PC-9 (cell line): ENCODE measurements at regions of chr17 and their contacts with region 1.

Region 1: DNA sequence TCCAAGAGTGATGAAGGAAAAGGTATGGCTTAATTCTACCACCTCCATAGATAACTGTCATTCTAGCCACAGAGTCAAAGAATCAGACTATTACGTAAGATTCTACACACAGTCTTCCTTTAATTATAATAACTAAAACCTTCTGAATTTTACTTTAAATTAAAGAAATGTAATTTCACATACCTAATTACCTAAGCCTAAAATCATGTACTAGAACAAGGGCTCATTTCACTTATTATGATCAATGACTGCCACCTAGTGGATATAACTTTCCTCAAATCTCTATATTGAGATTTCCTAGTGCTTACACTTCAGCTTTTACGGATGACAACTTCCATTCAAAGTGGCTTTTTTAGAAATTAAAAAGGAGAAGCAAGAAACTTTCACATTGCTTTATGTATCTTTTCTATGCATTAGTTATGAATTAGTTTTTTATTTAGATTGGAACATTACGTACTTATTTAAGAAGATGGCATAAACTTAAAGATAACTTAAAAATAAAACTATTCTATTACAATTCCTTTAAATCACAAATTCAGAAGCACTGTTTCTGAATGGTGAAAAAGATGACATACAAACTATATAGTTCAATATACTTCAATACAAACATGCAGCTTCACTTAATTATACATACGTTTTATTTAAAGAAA is 18.2 kb upstream of the ABCA10 start:
- DNase-seq: no peak
- H3K4me3 ChIP-seq: no peak overlapping the region
- H3K27ac ChIP-seq: no peak overlapping the region
- H3K4me1 ChIP-seq: peaks cover 11% of the 10 kb centered on the region; the same call in 1 of the 2 replicates
- H3K27me3 ChIP-seq: no peaks in the 10 kb centered on the region
- CTCF ChIP-seq: peak; percentile 85

Region 2: GRCh38 chr17:67959288-67959900 is 1287.5 kb before region 1 on chr17:
- CTCF ChIA-PET with region 1: no interaction called
- POLR2A ChIA-PET with region 1: no interaction called
- intact Hi-C with region 1: loop called (anchors 10 kb)
- DNase-seq: no peak
- H3K4me3 ChIP-seq: no peak overlapping the region
- H3K27ac ChIP-seq: no peak overlapping the region
- H3K4me1 ChIP-seq: no peaks in the 10 kb centered on the region
- H3K27me3 ChIP-seq: no peaks in the 10 kb centered on the region
- CTCF ChIP-seq: no peak

Region 3: GRCh38 chr17:69287168-69287567 is 40.3 kb after region 1 on chr17:
- CTCF ChIA-PET with region 1: no interaction called
- POLR2A ChIA-PET with region 1: no interaction called
- intact Hi-C with region 1: no loop called
- DNase-seq: no peak
- H3K4me3 ChIP-seq: no peak overlapping the region
- H3K27ac ChIP-seq: no peak overlapping the region
- H3K4me1 ChIP-seq: no peaks in the 10 kb centered on the region
- H3K27me3 ChIP-seq: no peaks in the 10 kb centered on the region
- CTCF ChIP-seq: no peak